ENCODE measurements at regions of chr1 and their contacts with region 1.

Region 1: DNA sequence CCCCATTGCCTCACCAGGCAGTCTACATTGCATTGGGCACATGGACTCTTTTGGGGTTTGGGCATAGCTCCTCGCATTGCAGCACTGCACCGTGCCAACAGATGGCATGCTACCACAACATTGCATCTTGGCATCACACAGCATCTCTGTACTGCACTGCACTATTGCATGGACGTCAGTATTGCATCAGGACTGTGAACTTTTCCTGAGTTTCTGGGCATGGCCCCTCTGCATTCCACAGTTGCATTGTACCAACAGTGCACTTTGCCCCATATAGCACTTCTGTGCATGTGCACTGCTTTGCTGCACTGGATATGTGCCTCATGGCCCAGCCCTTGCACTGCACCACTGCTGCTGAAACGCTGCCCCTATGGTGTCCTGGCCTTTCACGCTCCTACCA is 9.6 kb downstream of the PTPRU start:
- DNase-seq: peak; percentile 49
- H3K4me3 ChIP-seq: no peak overlapping the region
- H3K27ac ChIP-seq: no peak overlapping the region
- H3K4me1 ChIP-seq: peaks cover 9% of the 10 kb centered on the region
- H3K27me3 ChIP-seq: no peaks in the 10 kb centered on the region
- CTCF ChIP-seq: peak; percentile 70

Region 2: DNA sequence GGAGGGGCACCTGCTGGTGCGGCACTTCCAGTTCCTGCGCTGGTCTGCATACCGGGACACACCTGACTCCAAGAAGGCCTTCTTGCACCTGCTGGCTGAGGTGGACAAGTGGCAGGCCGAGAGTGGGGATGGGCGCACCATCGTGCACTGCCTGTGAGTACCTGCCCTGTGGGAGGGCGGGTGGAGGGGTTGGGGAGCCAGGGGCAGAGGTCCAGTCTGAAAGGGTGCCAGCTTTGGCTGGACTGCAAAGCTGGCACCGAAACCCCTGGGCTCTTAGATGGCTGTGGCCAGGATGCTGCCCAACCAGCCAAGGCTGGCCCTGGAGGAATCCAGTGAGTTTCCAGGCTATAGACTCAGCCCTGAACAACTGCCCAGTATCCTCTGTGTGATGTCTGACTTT is 77.8 kb after region 1 on chr1:
- CTCF ChIA-PET with region 1: no interaction called
- POLR2A ChIA-PET with region 1: interaction called, 12 read pairs
- intact Hi-C with region 1: no loop called
- DNase-seq: no peak
- H3K4me3 ChIP-seq: no peak overlapping the region
- H3K27ac ChIP-seq: no peak overlapping the region
- H3K4me1 ChIP-seq: no peaks in the 10 kb centered on the region
- H3K27me3 ChIP-seq: no peaks in the 10 kb centered on the region
- CTCF ChIP-seq: no peak

Region 3: GRCh38 chr1:29698033-29698432 is 452.2 kb after region 1 on chr1:
- CTCF ChIA-PET with region 1: no interaction called
- POLR2A ChIA-PET with region 1: no interaction called
- intact Hi-C with region 1: loop called (anchors 10 kb)
- DNase-seq: peak; percentile 91
- H3K4me3 ChIP-seq: no peak overlapping the region
- H3K27ac ChIP-seq: no peak overlapping the region
- H3K4me1 ChIP-seq: no peaks in the 10 kb centered on the region
- H3K27me3 ChIP-seq: no peaks in the 10 kb centered on the region
- CTCF ChIP-seq: peak; percentile 79

Measured in A673 (cell line).